Breast epithelium (tissue), 4 donors: ENCODE measurements at regions of chr6 and their contacts with region 1.

Region 1: DNA sequence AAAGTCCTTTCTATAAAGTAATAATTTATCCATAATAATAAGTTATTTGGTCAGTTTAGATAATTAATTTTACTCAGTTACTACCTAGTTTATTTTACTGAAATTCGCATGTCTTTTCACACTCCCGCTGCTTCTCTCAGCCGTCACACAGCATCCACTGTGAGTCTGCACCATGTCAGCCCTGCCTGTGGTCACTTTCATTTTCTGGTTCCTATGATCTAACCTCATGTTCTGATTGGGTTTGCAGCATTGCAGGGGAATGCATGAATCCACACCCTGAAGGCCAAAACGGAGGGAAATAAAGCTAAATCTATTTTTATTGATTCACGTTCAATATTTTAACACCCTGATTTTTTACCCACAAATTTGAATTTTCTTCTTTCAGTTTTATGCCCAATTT is 47.4 kb downstream of the PDE10A start:
- DNase-seq: no peak
- H3K4me3 ChIP-seq: peak overlapping the region; percentile 10 to 51 (median 18)
- H3K27ac ChIP-seq: no peak overlapping the region
- H3K4me1 ChIP-seq: no peaks in the 10 kb centered on the region
- H3K27me3 ChIP-seq: no peaks in the 10 kb centered on the region
- CTCF ChIP-seq: no peak
- POLR2A ChIP-seq: no peak

Region 2: DNA sequence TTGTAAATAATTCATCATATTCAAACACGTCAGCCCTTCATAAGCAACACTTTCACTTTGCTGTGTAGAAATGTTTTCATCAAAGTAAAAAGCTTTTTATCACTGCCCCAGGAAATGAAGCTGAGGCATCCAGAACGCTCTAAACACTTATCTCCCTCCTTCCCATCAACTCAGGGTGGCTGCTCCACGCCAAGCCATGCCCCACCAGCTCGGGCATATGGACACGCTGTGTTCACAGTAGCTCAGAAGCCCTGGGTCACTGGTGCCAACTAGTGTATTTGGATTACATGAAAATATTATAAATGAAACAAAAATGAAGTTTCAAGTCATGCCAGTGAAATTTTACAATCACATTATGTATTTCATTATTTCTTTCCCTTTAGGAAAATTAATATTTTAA is 37.1 kb after region 1 on chr6:
- intact Hi-C with region 1: loop called (anchors 1 kb)
- DNase-seq: no peak
- H3K4me3 ChIP-seq: no peak overlapping the region
- H3K27ac ChIP-seq: no peak overlapping the region
- H3K4me1 ChIP-seq: no peaks in the 10 kb centered on the region
- H3K27me3 ChIP-seq: peaks cover 0 to 11% of the 10 kb centered on the region in 2 donors
- CTCF ChIP-seq: no peak
- POLR2A ChIP-seq: no peak